GM12878 (cell line): ENCODE measurements at regions of chr19 and their contacts with region 1.

Region 1: GRCh38 chr19:48608798-48609263 is 2.3 kb downstream of the SPACA4 start:
- DNase-seq: no peak
- ATAC-seq: peak; percentile 93
- H3K4me3 ChIP-seq: no peak overlapping the region
- H3K27ac ChIP-seq: no peak overlapping the region
- H3K4me1 ChIP-seq: no peaks in the 10 kb centered on the region
- H3K27me3 ChIP-seq: no peaks in the 10 kb centered on the region
- CTCF ChIP-seq: peak; percentile 74 to 84 (median 82); a peak in 5 of 6 replicates
- EP300 ChIP-seq: no peak
- POLR2A ChIP-seq: no peak
- RAD21 ChIP-seq: peak; percentile 74

Region 2: DNA sequence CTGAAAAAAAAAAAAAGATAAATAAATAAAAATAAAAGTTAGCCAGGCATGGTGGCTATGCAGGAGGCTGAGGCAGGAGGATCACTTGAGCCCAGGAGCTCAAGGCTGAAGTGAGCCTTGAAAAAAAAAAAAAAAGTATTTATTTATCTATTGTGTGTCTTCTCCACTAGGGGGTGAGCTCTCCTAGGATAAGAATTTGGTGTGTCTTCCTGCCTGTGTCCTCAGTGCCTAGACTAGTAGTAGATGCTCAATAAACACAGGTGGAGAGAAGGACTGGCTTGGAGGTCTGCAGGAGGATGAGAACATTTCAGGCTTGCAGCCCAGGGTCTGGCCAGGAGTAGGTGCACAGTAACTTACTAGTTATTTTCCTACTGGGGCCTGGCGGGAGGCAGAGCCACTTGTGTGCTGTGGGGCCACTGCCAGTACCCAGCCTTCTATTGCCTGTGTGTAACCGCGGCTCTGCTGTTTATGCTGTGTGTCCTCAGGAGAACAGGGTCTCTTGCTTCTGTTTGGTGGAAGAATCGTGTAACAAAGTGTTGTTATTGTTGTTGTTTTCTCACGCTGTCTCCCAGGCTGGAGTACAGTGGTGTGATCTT is 102.6 kb before region 1 on chr19:
- CTCF ChIA-PET with region 1: interaction called, 11 read pairs
- POLR2A ChIA-PET with region 1: no interaction called
- RAD21 ChIA-PET with region 1: interaction called, 16 read pairs
- SMC1A ChIA-PET with region 1: interaction called, 4 read pairs
- in situ Hi-C with region 1: no loop called
- intact Hi-C with region 1: no loop called
- DNase-seq: no peak
- ATAC-seq: peak; percentile 21
- H3K4me3 ChIP-seq: no peak overlapping the region
- H3K27ac ChIP-seq: no peak overlapping the region
- H3K4me1 ChIP-seq: peaks cover under 1% of the 10 kb centered on the region; the same call in 1 of the 2 replicates
- H3K27me3 ChIP-seq: no peaks in the 10 kb centered on the region; a peak in 1 of 4 replicates
- CTCF ChIP-seq: peak; percentile 39 to 57 (median 54)
- EP300 ChIP-seq: no peak
- POLR2A ChIP-seq: no peak
- RAD21 ChIP-seq: peak; percentile 83

Region 3: GRCh38 chr19:48558018-48558684 is 50.7 kb before region 1 on chr19:
- CTCF ChIA-PET with region 1: no interaction called
- POLR2A ChIA-PET with region 1: interaction called, 13 read pairs
- RAD21 ChIA-PET with region 1: no interaction called
- SMC1A ChIA-PET with region 1: no interaction called
- in situ Hi-C with region 1: no loop called
- intact Hi-C with region 1: no loop called
- DNase-seq: no peak
- ATAC-seq: no peak
- H3K4me3 ChIP-seq: no peak overlapping the region
- H3K27ac ChIP-seq: no peak overlapping the region
- H3K4me1 ChIP-seq: no peaks in the 10 kb centered on the region
- H3K27me3 ChIP-seq: no peaks in the 10 kb centered on the region
- CTCF ChIP-seq: no peak
- EP300 ChIP-seq: no peak
- POLR2A ChIP-seq: no peak
- RAD21 ChIP-seq: no peak

Region 4: DNA sequence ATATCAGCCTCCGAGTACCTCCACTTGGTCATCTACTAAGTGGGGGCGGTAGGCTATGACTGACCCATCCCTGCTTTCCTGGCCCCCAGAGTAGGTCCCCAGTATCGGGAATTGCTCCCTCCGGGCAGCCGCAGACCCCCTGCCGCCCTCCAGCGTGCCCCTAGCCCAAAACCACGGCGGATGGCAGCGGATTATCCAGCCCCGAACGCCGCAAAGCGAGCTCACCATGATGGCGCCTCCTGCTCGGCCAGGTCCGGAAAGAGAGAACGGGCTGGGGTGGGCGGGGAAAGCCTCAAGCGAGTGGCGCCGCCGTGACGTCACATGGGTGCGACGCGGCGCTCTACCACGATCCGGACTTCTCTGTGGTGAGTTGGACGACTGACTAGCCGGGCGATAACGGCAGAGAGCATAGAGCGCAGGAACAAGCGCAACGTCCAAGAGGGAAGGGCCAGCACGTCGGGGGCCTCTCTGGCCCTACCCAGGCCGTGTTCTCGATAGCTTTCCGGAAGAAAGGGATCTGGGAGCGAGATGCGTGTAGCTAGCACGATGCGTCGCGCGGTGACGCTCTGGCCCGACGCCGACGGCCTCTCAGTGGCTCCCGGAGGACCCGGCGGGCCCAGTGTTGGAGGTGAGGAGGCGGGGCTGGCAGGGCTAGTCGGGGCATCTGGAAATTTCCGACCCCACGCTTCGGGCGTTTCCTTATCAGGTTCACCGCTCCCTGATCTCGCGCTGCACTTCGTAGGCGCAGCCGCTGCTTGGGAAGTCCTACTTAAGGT is 10.3 kb after region 1 on chr19 and contains the starts of genes RPL18 and SPHK2:
- CTCF ChIA-PET with region 1: interaction called, 8 read pairs
- POLR2A ChIA-PET with region 1: interaction called, 5 read pairs
- RAD21 ChIA-PET with region 1: interaction called, 14 read pairs
- SMC1A ChIA-PET with region 1: interaction called, 3 read pairs
- in situ Hi-C with region 1: no loop called
- intact Hi-C with region 1: no loop called
- DNase-seq: peak; percentile 98
- ATAC-seq: peak; percentile 85
- H3K4me3 ChIP-seq: peak within 1 kb of the TSS; percentile 99
- H3K27ac ChIP-seq: peak within 1 kb of the TSS; percentile 95
- H3K4me1 ChIP-seq: peaks cover 24% of the 10 kb centered on the region
- H3K27me3 ChIP-seq: no peaks in the 10 kb centered on the region
- CTCF ChIP-seq: no peak; a peak in 1 of 6 replicates
- EP300 ChIP-seq: no peak
- POLR2A ChIP-seq: peak; percentile 99
- RAD21 ChIP-seq: no peak
- polyA plus RNA-seq, gene RPL18: 393 to 844 TPM
- polyA plus RNA-seq, gene SPHK2: 0.37 to 0.75 TPM

Region 5: GRCh38 chr19:48637170-48637947 is 28.5 kb after region 1 on chr19 and contains the start of gene DBP:
- CTCF ChIA-PET with region 1: no interaction called
- POLR2A ChIA-PET with region 1: interaction called, 11 read pairs
- RAD21 ChIA-PET with region 1: interaction called, 5 read pairs
- SMC1A ChIA-PET with region 1: interaction called, 5 read pairs
- in situ Hi-C with region 1: no loop called
- intact Hi-C with region 1: no loop called
- DNase-seq: peak; percentile 96
- ATAC-seq: peak; percentile 85
- H3K4me3 ChIP-seq: peak within 1 kb of the TSS; percentile 89
- H3K27ac ChIP-seq: peak within 1 kb of the TSS; percentile 93
- H3K4me1 ChIP-seq: peaks cover 28% of the 10 kb centered on the region
- H3K27me3 ChIP-seq: no peaks in the 10 kb centered on the region
- CTCF ChIP-seq: no peak; a peak in 1 of 6 replicates
- EP300 ChIP-seq: no peak; a peak in 2 of 4 replicates
- POLR2A ChIP-seq: peak; percentile 65; the same call in 1 of the 2 replicates
- RAD21 ChIP-seq: no peak
- polyA plus RNA-seq, gene DBP: 2.0 to 2.6 TPM